ENCODE measurements at regions of chr11 and their contacts with region 1.

Region 1: GRCh38 chr11:64304316-64305072 is 830 bp upstream of the ESRRA start:
- DNase-seq: peak; percentile 97
- ATAC-seq: peak; percentile 40
- H3K4me3 Mint-ChIP-seq: peak overlapping the region; percentile 86
- H3K27ac Mint-ChIP-seq: peak overlapping the region; percentile 98
- H3K4me1 Mint-ChIP-seq: peaks cover 43% of the 10 kb centered on the region
- H3K27me3 Mint-ChIP-seq: peaks cover 21% of the 10 kb centered on the region

Region 2: GRCh38 chr11:64000026-64000739 is 304.3 kb before region 1 on chr11:
- CTCF ChIA-PET with region 1: interaction called, 11 read pairs
- DNase-seq: peak; percentile 77
- ATAC-seq: peak; percentile 89
- H3K4me3 Mint-ChIP-seq: no peak overlapping the region
- H3K27ac Mint-ChIP-seq: no peak overlapping the region
- H3K4me1 Mint-ChIP-seq: peaks cover 5% of the 10 kb centered on the region
- H3K27me3 Mint-ChIP-seq: peaks cover 7% of the 10 kb centered on the region

Region 3: DNA sequence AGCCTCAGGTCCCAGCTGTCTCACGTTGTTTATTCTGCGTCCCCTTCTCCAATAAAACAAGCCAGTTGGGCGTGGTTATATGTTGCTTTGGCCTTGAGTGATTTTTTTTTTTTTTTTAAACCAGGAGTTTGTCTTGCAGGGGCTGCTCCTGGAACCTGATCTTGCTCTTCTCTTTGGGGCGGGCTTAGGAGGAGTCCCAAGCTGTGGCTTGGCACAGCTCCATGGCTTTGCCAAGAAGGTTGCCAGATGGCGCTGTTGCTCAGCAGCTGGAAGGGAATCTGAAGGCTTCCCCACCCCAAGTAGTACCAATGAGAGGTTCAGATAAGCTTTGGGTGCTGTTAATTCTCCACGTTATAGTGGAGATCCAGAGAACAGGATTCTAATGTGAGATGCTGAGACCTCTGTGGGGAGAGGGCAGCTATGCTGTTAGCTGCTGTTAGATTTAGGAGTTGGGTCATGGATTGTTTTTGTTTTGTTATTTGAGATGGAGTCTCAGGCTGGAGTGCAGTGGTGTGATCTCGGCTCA is 100.0 kb before region 1 on chr11:
- CTCF ChIA-PET with region 1: interaction called, 169 read pairs
- DNase-seq: peak; percentile 86
- ATAC-seq: peak; percentile 30
- H3K4me3 Mint-ChIP-seq: peak overlapping the region; percentile 45
- H3K27ac Mint-ChIP-seq: peak overlapping the region; percentile 78
- H3K4me1 Mint-ChIP-seq: peaks cover 45% of the 10 kb centered on the region
- H3K27me3 Mint-ChIP-seq: no peaks in the 10 kb centered on the region

Region 4: GRCh38 chr11:64225612-64226506 is 78.6 kb before region 1 on chr11 and contains the starts of genes NUDT22 and TRPT1:
- CTCF ChIA-PET with region 1: interaction called, 33 read pairs
- DNase-seq: peak; percentile 96
- ATAC-seq: peak; percentile 71
- H3K4me3 Mint-ChIP-seq: peak within 1 kb of the TSS; percentile 87
- H3K27ac Mint-ChIP-seq: peak within 1 kb of the TSS; percentile 90
- H3K4me1 Mint-ChIP-seq: peaks cover 35% of the 10 kb centered on the region
- H3K27me3 Mint-ChIP-seq: no peaks in the 10 kb centered on the region
- total RNA-seq, gene NUDT22: 83.8 to 84.1 TPM
- total RNA-seq, gene TRPT1: 33.4 to 37.1 TPM

Region 5: GRCh38 chr11:64269380-64270234 is 34.9 kb before region 1 on chr11:
- CTCF ChIA-PET with region 1: interaction called, 104 read pairs
- DNase-seq: peak; percentile 98
- ATAC-seq: peak; percentile 71
- H3K4me3 Mint-ChIP-seq: peak overlapping the region; percentile 89
- H3K27ac Mint-ChIP-seq: peak overlapping the region; percentile 96
- H3K4me1 Mint-ChIP-seq: peaks cover 31% of the 10 kb centered on the region
- H3K27me3 Mint-ChIP-seq: no peaks in the 10 kb centered on the region

Region 6: GRCh38 chr11:64317957-64318693 is 13.6 kb after region 1 on chr11 and contains the start of gene PRDX5:
- CTCF ChIA-PET with region 1: interaction called, 35 read pairs
- DNase-seq: peak; percentile 97
- ATAC-seq: peak; percentile 84
- H3K4me3 Mint-ChIP-seq: peak within 1 kb of the TSS; percentile 95
- H3K27ac Mint-ChIP-seq: peak within 1 kb of the TSS; percentile 100
- H3K4me1 Mint-ChIP-seq: peaks cover 40% of the 10 kb centered on the region
- H3K27me3 Mint-ChIP-seq: no peaks in the 10 kb centered on the region
- total RNA-seq, gene PRDX5: 125 to 163 TPM